Activated T-helper 2 cell treated with anti-CD3 and anti-CD28 coated beads, Interferon-gamma antibody, Interleukin-2, Interleukin-4, amounts not matched to agents 10 μg/mL and 5 μg/mL and 100 μg/mL, durations not matched to agents 14 hours and 24 hours and 36 hours (primary cell): ENCODE measurements at regions of chr11 and their contacts with region 1.

Region 1: DNA sequence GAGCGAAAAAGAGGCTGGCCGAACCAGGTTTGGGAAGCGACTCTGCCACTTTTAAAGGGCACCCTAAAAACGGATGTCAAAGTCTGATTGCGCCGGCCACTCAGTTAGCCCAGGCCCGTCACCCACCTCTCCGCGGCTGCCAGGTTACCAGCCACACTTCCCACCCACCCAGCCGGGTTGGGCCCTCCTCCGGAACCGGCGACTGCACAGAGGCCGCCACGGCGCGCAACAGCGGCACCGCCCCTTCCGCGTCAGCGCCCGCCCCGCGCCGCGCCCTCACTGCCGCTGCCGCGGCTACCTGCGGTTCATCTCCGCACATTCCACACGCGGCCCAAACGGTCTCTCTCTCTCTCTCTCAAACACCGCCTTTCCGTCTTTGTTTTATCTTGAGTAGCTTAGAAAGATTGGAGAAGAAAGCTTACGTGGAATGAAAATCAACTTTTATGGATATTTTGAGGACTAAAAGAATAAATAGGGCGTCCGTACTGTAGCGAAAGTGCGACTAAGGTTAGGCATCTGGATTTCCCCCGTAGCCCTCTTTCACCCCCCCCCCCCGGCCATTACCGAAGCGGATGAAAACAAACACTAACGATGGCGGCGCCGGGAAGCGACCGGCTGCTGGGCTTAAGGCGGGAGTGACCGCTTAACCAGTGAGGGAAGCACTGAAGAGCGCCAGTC is at the starts of genes ATG13 and HARBI1:
- DNase-seq: peak; percentile 90
- H3K4me3 Mint-ChIP-seq: peak within 1 kb of the TSS; percentile 99
- H3K27ac Mint-ChIP-seq: peak within 1 kb of the TSS; percentile 100
- H3K4me1 Mint-ChIP-seq: peaks cover 28% of the 10 kb centered on the region
- H3K27me3 Mint-ChIP-seq: no peaks in the 10 kb centered on the region
- total RNA-seq, gene ATG13: 58.0 and 58.1 TPM in 2 replicates
- total RNA-seq, gene HARBI1: 3.8 and 4.7 TPM in 2 replicates

Region 2: GRCh38 chr11:46346886-46347636 is 270.1 kb before region 1 on chr11 and contains the start of gene DGKZ:
- intact Hi-C with region 1: loop called (anchors 1 kb)
- DNase-seq: peak; percentile 90
- H3K4me3 Mint-ChIP-seq: peak within 1 kb of the TSS; percentile 84
- H3K27ac Mint-ChIP-seq: peak within 1 kb of the TSS; percentile 83
- H3K4me1 Mint-ChIP-seq: peaks cover 52% of the 10 kb centered on the region
- H3K27me3 Mint-ChIP-seq: peaks cover 9% of the 10 kb centered on the region
- total RNA-seq, gene DGKZ: 82.3 and 86.1 TPM in 2 replicates

Region 3: DNA sequence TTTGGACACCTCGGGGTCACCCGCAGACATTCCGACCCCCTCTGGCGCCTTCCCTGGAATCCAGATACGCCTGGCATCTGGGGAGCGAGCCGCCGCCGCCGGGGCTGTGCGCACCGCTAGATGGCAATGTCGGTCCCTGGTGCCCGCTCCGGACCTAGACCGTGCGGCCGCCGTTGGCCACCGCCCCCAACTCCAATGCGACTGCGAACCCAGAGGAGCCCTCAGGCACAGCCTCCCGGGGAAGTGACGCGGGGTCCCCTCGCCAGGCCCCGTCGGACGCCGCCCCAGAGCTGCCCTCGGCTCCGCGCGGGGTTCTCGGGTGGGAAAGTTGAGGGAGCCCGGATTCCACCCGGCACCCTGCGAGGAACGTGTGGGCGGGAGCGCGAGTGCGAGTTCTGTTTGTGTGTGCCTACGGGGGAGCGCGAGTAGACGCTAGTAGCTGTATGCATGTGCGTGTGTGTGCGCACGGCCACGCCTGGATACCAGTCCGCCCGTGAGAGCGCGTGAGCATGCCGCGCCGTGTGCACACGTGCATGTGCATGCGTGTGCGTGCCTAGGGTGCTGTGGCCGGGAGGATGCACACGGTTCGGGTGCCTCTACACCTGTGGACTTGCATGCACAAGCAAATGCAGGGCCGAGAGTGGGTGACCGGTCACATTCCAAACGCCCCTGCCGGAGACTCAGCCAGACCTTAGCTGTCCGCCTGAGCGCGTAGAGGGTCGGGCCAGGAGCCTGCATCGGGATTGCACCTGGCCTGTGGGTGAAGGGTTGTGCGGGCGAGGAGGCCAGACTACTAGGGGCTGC is 227.5 kb before region 1 on chr11:
- intact Hi-C with region 1: loop called (anchors 5 kb)
- DNase-seq: peak; percentile 50
- H3K4me3 Mint-ChIP-seq: peak overlapping the region; percentile 13
- H3K27ac Mint-ChIP-seq: no peak overlapping the region
- H3K4me1 Mint-ChIP-seq: peaks cover 18% of the 10 kb centered on the region
- H3K27me3 Mint-ChIP-seq: peaks cover 63% of the 10 kb centered on the region

Region 4: GRCh38 chr11:46593550-46594373 is 23.4 kb before region 1 on chr11 and contains the start of gene AMBRA1:
- intact Hi-C with region 1: loop called (anchors 1 kb)
- DNase-seq: peak; percentile 82
- H3K4me3 Mint-ChIP-seq: peak within 1 kb of the TSS; percentile 90
- H3K27ac Mint-ChIP-seq: peak within 1 kb of the TSS; percentile 82
- H3K4me1 Mint-ChIP-seq: peaks cover 37% of the 10 kb centered on the region
- H3K27me3 Mint-ChIP-seq: no peaks in the 10 kb centered on the region
- total RNA-seq, gene AMBRA1: 31.5 and 32.7 TPM in 2 replicates

Region 5: DNA sequence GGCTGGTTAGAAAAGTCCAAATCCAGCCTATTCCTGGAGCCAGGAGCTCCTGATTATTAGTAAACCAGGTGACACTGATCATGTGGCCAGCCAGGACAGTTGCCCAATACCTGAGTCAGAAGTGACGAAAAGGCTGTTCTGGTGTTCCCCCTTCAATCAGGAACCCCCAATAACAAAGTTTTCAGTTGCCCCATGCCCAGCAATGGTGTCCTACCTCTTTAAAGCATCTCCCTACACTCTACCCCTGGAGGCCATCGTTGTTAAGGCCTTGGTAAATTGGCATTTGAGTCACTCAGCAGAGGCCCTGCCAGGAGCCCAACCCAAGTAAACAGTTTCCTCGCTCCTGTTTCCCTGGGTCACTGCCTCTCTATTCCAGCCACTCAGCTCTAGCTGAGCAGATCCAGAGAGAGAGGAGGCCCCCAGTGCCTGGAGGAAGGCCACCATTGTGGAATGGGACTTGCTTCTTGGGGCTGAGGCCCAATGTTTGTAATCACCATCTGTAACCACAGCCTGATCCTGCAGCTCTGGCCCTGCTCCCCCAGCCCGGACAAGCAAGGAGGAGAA is 58.2 kb after region 1 on chr11:
- intact Hi-C with region 1: no loop called
- DNase-seq: no peak
- H3K4me3 Mint-ChIP-seq: no peak overlapping the region
- H3K27ac Mint-ChIP-seq: no peak overlapping the region
- H3K4me1 Mint-ChIP-seq: peaks cover 31% of the 10 kb centered on the region
- H3K27me3 Mint-ChIP-seq: no peaks in the 10 kb centered on the region

Region 6: GRCh38 chr11:46700241-46701077 is 83.3 kb after region 1 on chr11 and contains the starts of genes ARHGAP1 and ZNF408:
- intact Hi-C with region 1: loop called (anchors 1 kb)
- DNase-seq: peak; percentile 99
- H3K4me3 Mint-ChIP-seq: peak within 1 kb of the TSS; percentile 96
- H3K27ac Mint-ChIP-seq: peak within 1 kb of the TSS; percentile 92
- H3K4me1 Mint-ChIP-seq: peaks cover 28% of the 10 kb centered on the region
- H3K27me3 Mint-ChIP-seq: no peaks in the 10 kb centered on the region
- total RNA-seq, gene ARHGAP1: 58.8 and 66.8 TPM in 2 replicates
- total RNA-seq, gene ZNF408: 10.2 and 12.2 TPM in 2 replicates

Region 7: GRCh38 chr11:46845740-46846509 is 228.8 kb after region 1 on chr11 and contains the start of gene CKAP5:
- intact Hi-C with region 1: loop called (anchors 5 kb)
- DNase-seq: peak; percentile 83
- H3K4me3 Mint-ChIP-seq: peak within 1 kb of the TSS; percentile 96
- H3K27ac Mint-ChIP-seq: peak within 1 kb of the TSS; percentile 97
- H3K4me1 Mint-ChIP-seq: peaks cover 35% of the 10 kb centered on the region
- H3K27me3 Mint-ChIP-seq: no peaks in the 10 kb centered on the region
- total RNA-seq, gene CKAP5: 127 and 136 TPM in 2 replicates